B cell (primary cell): ENCODE measurements at regions of chr6 and their contacts with region 1.

Region 1: DNA sequence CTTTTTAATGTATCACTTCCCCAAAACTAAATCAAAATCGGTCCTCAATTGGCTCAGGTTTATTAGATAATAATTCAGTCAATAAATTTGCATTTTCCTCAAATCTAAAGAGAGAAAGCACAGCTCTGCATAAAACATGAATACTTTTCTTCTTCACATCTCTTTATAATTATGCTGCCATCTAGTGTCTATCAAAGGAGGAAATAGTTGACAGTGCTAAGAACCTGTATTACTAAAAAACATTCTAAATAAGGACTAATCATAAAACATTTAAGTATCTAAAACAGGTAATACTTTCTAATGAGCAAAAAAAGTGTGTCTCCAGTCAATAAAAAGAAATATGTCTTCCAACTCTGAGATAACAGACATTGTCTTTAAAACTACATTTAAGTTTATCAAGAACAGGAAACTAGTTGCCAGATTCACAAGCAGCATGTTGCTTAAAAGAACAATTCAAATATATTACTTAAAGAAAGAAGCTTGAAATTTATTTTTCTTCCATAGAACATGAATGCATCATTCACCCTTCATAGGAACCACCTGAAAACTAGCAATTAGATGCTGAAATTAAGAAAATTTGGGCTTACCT is 56.5 kb upstream of the DST start:
- DNase-seq: no peak
- ATAC-seq: no peak
- H3K4me3 ChIP-seq: no peak overlapping the region
- H3K4me3 Mint-ChIP-seq: no peak overlapping the region
- H3K27ac ChIP-seq: no peak overlapping the region
- H3K27ac Mint-ChIP-seq: no peak overlapping the region
- H3K4me1 ChIP-seq: no peaks in the 10 kb centered on the region
- H3K4me1 Mint-ChIP-seq: no peaks in the 10 kb centered on the region
- H3K27me3 ChIP-seq: no peaks in the 10 kb centered on the region
- H3K27me3 Mint-ChIP-seq: no peaks in the 10 kb centered on the region
- CTCF ChIP-seq: peak; percentile 40

Region 2: DNA sequence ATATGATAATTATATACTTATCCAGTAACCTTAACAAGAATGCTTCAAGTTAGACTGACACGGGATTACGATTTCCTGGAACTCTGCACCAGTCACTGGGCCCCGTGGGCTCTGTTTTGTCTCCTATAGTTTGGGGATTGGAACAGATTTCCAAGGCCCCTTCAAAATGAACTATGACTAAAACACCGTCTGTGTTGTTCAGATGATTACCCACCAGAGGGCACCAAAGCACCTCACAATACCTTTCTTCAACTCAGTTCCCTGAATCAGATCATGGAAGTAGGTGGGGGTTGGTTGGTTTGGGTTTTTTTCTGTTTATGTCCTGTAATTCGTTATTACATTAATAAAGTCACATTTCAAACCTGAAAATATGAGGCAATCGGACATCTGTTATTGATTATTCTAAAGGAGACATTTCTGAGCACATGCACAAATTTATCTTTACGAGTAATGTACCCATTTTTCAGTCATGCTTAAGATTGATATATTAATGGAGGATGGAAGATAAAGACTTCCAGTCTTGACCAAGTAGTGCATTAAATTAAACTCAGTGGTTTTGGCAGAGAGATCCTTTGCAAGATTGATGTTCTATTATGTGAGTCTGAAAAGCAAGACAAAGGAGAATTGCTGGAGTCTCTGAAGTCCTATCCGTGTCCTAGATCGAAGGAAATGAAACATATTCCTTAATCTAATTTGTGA is 339.8 kb before region 1 on chr6:
- CTCF ChIA-PET with region 1: no interaction called
- POLR2A ChIA-PET with region 1: no interaction called
- intact Hi-C with region 1: loop called (anchors 5 kb)
- DNase-seq: peak; percentile 64
- ATAC-seq: peak; percentile 56
- H3K4me3 ChIP-seq: no peak overlapping the region
- H3K4me3 Mint-ChIP-seq: no peak overlapping the region
- H3K27ac ChIP-seq: no peak overlapping the region
- H3K27ac Mint-ChIP-seq: no peak overlapping the region
- H3K4me1 ChIP-seq: no peaks in the 10 kb centered on the region
- H3K4me1 Mint-ChIP-seq: no peaks in the 10 kb centered on the region
- H3K27me3 ChIP-seq: no peaks in the 10 kb centered on the region
- H3K27me3 Mint-ChIP-seq: no peaks in the 10 kb centered on the region
- CTCF ChIP-seq: peak; percentile 95

Region 3: DNA sequence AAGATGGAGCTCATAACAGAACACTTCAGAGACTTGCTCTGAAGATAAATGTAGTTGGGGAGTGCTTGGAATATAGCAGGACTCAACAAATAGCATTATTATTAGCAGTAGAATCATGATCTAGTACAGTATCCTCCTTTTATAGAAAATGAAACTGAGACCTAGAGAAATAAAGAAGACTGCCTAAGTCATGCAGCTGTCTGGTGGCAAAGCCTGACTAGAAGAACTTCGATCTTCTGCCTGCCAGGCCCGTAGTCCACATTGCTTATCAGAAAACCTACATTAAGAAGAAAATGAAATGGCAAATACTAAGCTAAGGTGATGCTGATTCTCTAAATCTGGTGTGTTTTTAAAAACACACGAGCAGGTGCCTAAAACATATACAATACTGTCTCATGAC is 10.0 kb before region 1 on chr6:
- CTCF ChIA-PET with region 1: interaction called, 10 read pairs
- POLR2A ChIA-PET with region 1: no interaction called
- intact Hi-C with region 1: no loop called
- DNase-seq: no peak
- ATAC-seq: no peak
- H3K4me3 ChIP-seq: no peak overlapping the region
- H3K4me3 Mint-ChIP-seq: no peak overlapping the region
- H3K27ac ChIP-seq: no peak overlapping the region
- H3K27ac Mint-ChIP-seq: no peak overlapping the region
- H3K4me1 ChIP-seq: no peaks in the 10 kb centered on the region
- H3K4me1 Mint-ChIP-seq: no peaks in the 10 kb centered on the region
- H3K27me3 ChIP-seq: no peaks in the 10 kb centered on the region
- H3K27me3 Mint-ChIP-seq: peaks cover 3% of the 10 kb centered on the region
- CTCF ChIP-seq: no peak